Activated CD4-positive, alpha-beta T cell treated with anti-CD3 and anti-CD28 coated beads, Interleukin-2, amount 10 ng/mL, durations not matched to agents 7 days and 5 days (primary cell): ENCODE measurements at regions of chr16 and their contacts with region 1.

Region 1: GRCh38 chr16:82302042-82302727 is 132.2 kb upstream of the MPHOSPH6 start:
- DNase-seq: no peak
- H3K4me3 Mint-ChIP-seq: no peak overlapping the region
- H3K27ac Mint-ChIP-seq: no peak overlapping the region
- H3K4me1 Mint-ChIP-seq: no peaks in the 10 kb centered on the region
- H3K27me3 Mint-ChIP-seq: peaks cover 5% of the 10 kb centered on the region

Region 2: DNA sequence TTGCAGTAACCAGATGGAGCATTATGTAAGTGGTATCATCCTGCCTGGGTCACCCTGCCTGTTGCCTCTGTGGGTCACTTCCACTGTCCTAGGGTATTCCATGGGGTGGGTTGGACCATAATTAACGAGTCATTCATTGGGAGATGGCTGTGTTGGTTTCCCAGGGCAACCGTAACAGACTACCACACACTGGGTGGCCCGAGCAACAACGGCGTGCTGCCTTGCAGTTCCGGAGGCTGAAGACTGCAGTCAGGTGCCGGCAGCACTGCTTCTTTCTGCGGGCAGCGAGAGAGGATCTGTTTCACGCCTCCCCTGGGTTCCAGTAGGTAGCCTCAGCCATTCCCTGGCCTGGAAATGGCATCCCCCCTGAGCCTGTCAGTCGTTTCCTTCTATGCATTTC is 886.4 kb before region 1 on chr16:
- CTCF ChIA-PET with region 1: no interaction called
- POLR2A ChIA-PET with region 1: interaction called, 18 read pairs
- DNase-seq: no peak
- H3K4me3 Mint-ChIP-seq: no peak overlapping the region
- H3K27ac Mint-ChIP-seq: no peak overlapping the region
- H3K4me1 Mint-ChIP-seq: peaks cover 5% of the 10 kb centered on the region
- H3K27me3 Mint-ChIP-seq: peaks cover 5% of the 10 kb centered on the region